Motor neuron (in vitro differentiated cells): ENCODE measurements at regions of chr3 and their contacts with region 1.

Region 1: DNA sequence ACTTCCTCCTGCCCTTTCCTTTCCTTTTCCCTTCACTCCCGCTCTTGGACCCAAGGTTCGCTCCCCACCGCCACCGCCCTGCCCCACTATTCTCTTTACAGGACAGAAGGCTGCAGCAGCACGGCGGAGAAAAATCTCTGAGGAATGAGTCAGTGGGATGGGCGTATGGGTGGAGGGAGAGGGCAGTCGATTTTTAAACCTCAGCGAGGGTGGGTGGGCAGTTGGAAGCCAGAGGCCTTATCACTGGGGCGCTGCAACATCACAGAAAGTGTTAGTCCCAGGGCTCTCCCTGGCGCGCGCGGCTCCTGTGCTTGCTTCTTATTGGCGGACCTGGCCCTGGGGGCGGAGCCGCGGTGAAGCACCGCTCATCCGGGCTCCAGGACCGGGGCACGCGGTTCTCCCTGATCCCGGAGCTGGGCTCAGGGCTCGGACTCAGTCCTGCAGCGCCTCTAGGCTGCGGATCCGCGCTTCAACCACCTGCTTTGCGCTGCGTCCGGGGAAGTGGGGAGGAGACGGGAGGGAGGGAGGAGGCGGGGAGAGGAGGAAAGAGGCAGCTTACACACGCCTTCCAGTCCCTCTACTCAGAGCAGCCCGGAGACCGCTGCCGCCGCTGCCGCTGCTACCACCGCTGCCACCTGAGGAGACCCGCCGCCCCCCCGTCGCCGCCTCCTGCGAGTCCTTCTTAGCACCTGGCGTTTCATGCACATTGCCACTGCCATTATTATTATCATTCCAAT is at the start of gene ALCAM:
- ATAC-seq: peak; percentile 76 to 94 (median 92)
- H3K4me3 ChIP-seq: peak within 1 kb of the TSS; percentile 46 to 54 (median 50)
- H3K27ac ChIP-seq: no peak within 1 kb of the TSS
- H3K4me1 ChIP-seq: peaks cover 0 to 5% of the 10 kb centered on the region in 2 donors
- total RNA-seq, gene ALCAM: 5.4 to 136 (median 54.2) TPM

Region 2: DNA sequence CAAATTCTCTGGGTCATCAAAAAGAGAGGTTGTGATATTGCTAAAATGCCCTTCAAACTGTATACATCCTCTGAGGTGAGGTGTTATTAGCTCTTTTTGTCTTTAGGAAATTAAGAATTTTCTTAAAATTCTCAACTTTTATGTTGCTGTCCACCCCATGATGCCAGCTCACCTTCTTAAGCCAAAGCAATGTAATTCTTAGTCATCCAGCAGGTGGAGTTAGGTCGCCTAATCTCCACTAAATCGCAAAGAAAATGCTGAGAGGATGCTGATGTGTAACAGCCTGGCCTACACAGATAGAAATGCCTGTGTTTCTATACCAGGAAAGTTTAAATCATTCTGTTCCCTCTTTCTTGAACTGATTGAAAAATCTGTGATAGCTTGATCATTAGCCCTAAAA is 769.9 kb before region 1 on chr3:
- in situ Hi-C with region 1: loop called in 5 of 9 experiments (anchors 25 kb)
- ATAC-seq: peak; percentile 63 to 89 (median 76)
- H3K4me3 ChIP-seq: no peak overlapping the region
- H3K27ac ChIP-seq: no peak overlapping the region
- H3K4me1 ChIP-seq: peaks cover 0 to 6% of the 10 kb centered on the region in 2 donors

Region 3: DNA sequence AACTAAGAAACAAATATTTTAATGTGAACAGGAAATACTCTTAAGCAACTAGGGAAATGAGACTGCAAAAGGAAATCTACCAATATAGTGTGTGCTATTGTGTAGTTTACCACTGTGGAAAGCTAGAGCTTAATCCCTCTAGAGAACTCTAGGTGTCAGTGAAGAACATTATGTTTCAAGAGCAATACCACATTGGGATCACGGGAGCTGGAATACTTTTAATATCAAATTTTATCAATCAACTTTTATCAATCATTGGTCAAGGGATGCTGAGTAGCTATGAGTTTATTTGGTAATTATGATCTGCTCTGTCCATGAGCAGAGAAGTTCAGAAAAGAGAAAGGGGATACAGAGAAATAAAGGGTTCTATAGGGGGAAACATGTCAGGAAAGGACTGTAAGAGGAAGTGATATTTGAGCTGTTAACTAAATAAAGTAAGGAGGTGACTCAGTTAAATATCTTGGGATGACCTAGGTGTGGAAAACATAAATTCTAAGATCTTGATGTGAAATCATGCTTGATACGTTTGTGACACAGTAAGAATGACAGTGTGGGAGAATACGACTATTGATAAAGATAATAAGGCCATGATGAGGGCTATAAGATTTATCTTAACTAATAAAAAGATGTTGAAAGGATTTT is 762.0 kb before region 1 on chr3:
- in situ Hi-C with region 1: loop called in 5 of 9 experiments (anchors 25 kb)
- ATAC-seq: peak in 4 of 8 experiments; percentile 49 to 82 (median 64)
- H3K4me3 ChIP-seq: no peak overlapping the region
- H3K27ac ChIP-seq: no peak overlapping the region
- H3K4me1 ChIP-seq: no peaks in the 10 kb centered on the region